BJ (cell line): ENCODE measurements at regions of chr10 and their contacts with region 1.

Region 1: DNA sequence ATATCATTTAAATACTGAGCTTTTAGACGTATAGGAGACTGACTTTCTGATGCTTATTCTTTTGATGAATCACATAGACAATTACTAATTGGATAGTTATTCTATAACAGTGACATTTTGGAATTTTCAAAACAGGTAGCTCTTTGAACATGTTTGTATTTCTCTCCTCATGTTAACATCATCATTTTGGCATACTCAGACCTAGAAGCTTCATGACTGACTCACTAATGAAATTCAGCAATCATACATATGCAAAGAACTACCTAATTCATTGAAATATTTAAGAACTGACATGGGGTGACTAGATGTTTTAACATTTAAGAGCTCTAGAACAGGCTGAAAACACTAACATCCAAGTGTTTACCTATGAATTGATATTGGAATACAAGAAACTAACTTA is 192.3 kb downstream of the VTI1A start:
- DNase-seq: no peak
- H3K4me3 ChIP-seq: no peak overlapping the region
- H3K27me3 ChIP-seq: no peaks in the 10 kb centered on the region
- CTCF ChIP-seq: no peak

Region 2: GRCh38 chr10:112711366-112711765 is 72.1 kb after region 1 on chr10:
- CTCF ChIA-PET with region 1: no interaction called
- POLR2A ChIA-PET with region 1: no interaction called
- DNase-seq: peak; percentile 60
- H3K4me3 ChIP-seq: no peak overlapping the region
- H3K27me3 ChIP-seq: no peaks in the 10 kb centered on the region
- CTCF ChIP-seq: no peak

Region 3: GRCh38 chr10:112811740-112812551 is 172.6 kb after region 1 on chr10:
- CTCF ChIA-PET with region 1: no interaction called
- POLR2A ChIA-PET with region 1: no interaction called
- DNase-seq: peak; percentile 96
- H3K4me3 ChIP-seq: peak overlapping the region; percentile 19
- H3K27me3 ChIP-seq: no peaks in the 10 kb centered on the region
- CTCF ChIP-seq: no peak

Region 4: GRCh38 chr10:113087165-113088029 is 448.1 kb after region 1 on chr10:
- CTCF ChIA-PET with region 1: no interaction called
- POLR2A ChIA-PET with region 1: interaction called, 20 read pairs
- DNase-seq: peak; percentile 98
- H3K4me3 ChIP-seq: no peak overlapping the region
- H3K27me3 ChIP-seq: no peaks in the 10 kb centered on the region
- CTCF ChIP-seq: no peak